ENCODE measurements at regions of chr1 and their contacts with region 1.

Region 1: GRCh38 chr1:26677306-26678115 is 18.3 kb upstream of the ARID1A start:
- DNase-seq: peak; percentile 84 to 89 (median 89)
- H3K4me3 ChIP-seq: peak overlapping the region in 6 of 7 experiments; percentile 2 to 74 (median 42)
- H3K27ac ChIP-seq: no peak overlapping the region
- H3K4me1 ChIP-seq: peaks cover 7 to 19% (median 14%) of the 10 kb centered on the region in 4 experiments
- H3K27me3 ChIP-seq: no peaks in the 10 kb centered on the region

Region 2: GRCh38 chr1:26161415-26162219 is 515.9 kb before region 1 on chr1:
- CTCF ChIA-PET with region 1: no interaction called
- POLR2A ChIA-PET with region 1: no interaction called
- DNase-seq: peak; percentile 48 to 75 (median 60)
- H3K4me3 ChIP-seq: peak overlapping the region; percentile 46 to 74 (median 64)
- H3K27ac ChIP-seq: peak overlapping the region in 1 of 2 experiments; percentile 5
- H3K4me1 ChIP-seq: peaks cover 0 to 60% (median 43%) of the 10 kb centered on the region in 4 experiments
- H3K27me3 ChIP-seq: peaks cover 0 to 22% (median 11%) of the 10 kb centered on the region in 5 experiments

Region 3: DNA sequence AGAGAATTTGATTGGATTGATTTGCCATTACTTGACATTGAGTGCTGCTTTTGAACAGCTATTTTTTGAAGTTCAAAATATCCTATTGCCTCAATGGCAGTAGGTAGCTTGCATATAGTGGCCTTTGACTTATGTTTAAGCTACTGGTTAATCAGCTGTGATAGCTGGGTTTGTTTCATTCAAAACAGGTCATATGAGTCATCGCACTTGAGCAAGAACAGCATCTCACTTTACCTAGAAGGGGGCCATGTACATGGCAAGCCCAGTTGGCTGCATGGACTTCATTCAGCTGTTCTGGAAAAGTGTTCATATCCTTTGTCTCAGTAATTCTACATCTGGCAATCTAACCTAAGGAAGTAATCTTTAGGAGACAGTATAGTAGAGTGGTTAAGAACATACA is 10.7 kb before region 1 on chr1:
- CTCF ChIA-PET with region 1: interaction called, 10 read pairs
- POLR2A ChIA-PET with region 1: no interaction called
- DNase-seq: no peak
- H3K4me3 ChIP-seq: no peak overlapping the region
- H3K27ac ChIP-seq: no peak overlapping the region
- H3K4me1 ChIP-seq: no peaks in the 10 kb centered on the region
- H3K27me3 ChIP-seq: no peaks in the 10 kb centered on the region

Region 4: DNA sequence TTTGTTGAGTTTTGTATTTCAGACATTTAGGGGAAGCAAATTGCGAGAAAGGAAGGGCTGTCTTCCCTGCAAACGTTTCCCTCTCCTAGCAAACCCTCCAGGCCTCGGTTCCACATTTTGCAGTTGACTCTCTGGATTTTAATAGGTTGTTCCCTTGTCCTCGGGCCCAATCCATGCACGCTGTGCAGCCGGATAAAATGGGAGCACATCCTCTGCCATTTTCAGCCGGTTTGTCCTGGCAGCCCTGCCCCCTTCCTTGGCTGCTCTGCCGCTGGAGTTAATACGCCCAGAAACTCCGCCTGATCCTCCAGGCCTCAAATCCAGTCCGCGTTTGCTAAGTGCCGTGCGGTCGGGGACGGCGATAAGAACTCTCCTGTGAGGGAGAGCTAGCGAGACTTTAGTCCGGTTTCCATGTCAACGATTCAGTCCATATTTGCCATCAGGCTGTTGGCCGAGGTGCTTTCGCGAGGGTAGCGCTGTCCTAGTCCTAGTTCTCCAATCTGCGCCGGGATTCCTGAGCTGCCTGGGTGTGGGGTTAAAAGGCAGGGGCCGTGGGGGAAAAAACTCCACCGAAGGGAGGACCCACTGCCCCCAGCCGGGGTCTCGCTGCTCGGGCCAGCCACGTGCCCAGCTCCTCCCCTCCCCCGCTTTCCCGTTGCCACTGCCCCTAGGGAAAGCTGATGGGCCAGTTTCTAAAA is 15.4 kb after region 1 on chr1:
- CTCF ChIA-PET with region 1: interaction called, 68 read pairs
- POLR2A ChIA-PET with region 1: interaction called, 6 read pairs
- DNase-seq: peak; percentile 97 to 99 (median 98)
- H3K4me3 ChIP-seq: peak overlapping the region; percentile 64 to 93 (median 75)
- H3K27ac ChIP-seq: peak overlapping the region; percentile 67 to 91
- H3K4me1 ChIP-seq: peaks cover 25 to 57% (median 52%) of the 10 kb centered on the region in 4 experiments
- H3K27me3 ChIP-seq: no peaks in the 10 kb centered on the region

Region 5: GRCh38 chr1:26697978-26698849 is 20.7 kb after region 1 on chr1:
- CTCF ChIA-PET with region 1: interaction called, 68 read pairs
- POLR2A ChIA-PET with region 1: interaction called, 6 read pairs
- DNase-seq: peak; percentile 69 to 93 (median 91)
- H3K4me3 ChIP-seq: peak overlapping the region; percentile 58 to 88 (median 83)
- H3K27ac ChIP-seq: peak overlapping the region; percentile 41 to 94
- H3K4me1 ChIP-seq: peaks cover 64 to 74% (median 70%) of the 10 kb centered on the region in 4 experiments
- H3K27me3 ChIP-seq: no peaks in the 10 kb centered on the region